Naive thymus-derived CD4-positive, alpha-beta T cell (primary cell): ENCODE measurements at regions of chr4 and their contacts with region 1.

Region 1: GRCh38 chr4:108834835-108835384 is 72.1 kb upstream of the ETNPPL start:
- DNase-seq: peak in 4 of 9 donors; percentile 14 to 33 (median 18)
- ATAC-seq: no peak
- H3K4me3 ChIP-seq: no peak overlapping the region
- H3K4me3 Mint-ChIP-seq: no peak overlapping the region
- H3K27ac ChIP-seq: no peak overlapping the region
- H3K27ac Mint-ChIP-seq: no peak overlapping the region
- H3K4me1 ChIP-seq: no peaks in the 10 kb centered on the region
- H3K4me1 Mint-ChIP-seq: peaks cover 0 to 8% (median 0%) of the 10 kb centered on the region in 7 donors
- H3K27me3 ChIP-seq: no peaks in the 10 kb centered on the region
- H3K27me3 Mint-ChIP-seq: peaks cover 0 to 17% (median 12%) of the 10 kb centered on the region in 5 donors

Region 2: GRCh38 chr4:108345862-108346817 is 488.8 kb before region 1 on chr4:
- CTCF ChIA-PET with region 1: no interaction called
- POLR2A ChIA-PET with region 1: no interaction called
- intact Hi-C with region 1: no loop called
- DNase-seq: no peak
- ATAC-seq: no peak
- H3K4me3 ChIP-seq: no peak overlapping the region
- H3K4me3 Mint-ChIP-seq: peak overlapping the region in 2 of 10 donors; percentile 41 to 46
- H3K27ac ChIP-seq: no peak overlapping the region
- H3K27ac Mint-ChIP-seq: peak overlapping the region in 5 of 9 donors; percentile 7 to 94 (median 39)
- H3K4me1 ChIP-seq: peaks cover 12 to 37% of the 10 kb centered on the region in 2 donors
- H3K4me1 Mint-ChIP-seq: peaks cover 31 to 76% (median 51%) of the 10 kb centered on the region in 7 donors
- H3K27me3 ChIP-seq: no peaks in the 10 kb centered on the region
- H3K27me3 Mint-ChIP-seq: peaks cover 0 to 5% (median 0%) of the 10 kb centered on the region in 5 donors

Region 3: DNA sequence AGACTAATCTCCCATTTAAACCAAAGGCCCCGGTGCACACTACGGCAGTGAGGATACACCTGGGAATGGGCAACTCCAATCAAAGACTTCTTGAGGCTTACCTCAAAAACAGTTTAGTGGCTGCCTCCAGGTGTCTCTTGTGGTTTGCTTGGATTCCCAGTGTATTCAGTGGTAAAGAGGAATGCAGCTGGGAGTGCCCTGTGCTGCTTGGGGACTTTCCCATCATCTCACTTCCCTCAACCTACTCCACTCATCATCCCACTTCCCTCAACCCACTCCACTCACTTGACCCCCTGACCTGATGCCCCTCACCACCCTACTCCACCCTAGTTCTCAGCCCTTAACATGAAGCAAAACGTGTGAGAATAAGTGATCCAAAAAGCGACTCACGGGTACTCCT is 105.2 kb after region 1 on chr4:
- CTCF ChIA-PET with region 1: no interaction called
- POLR2A ChIA-PET with region 1: no interaction called
- intact Hi-C with region 1: no loop called
- DNase-seq: no peak
- ATAC-seq: no peak
- H3K4me3 ChIP-seq: no peak overlapping the region
- H3K4me3 Mint-ChIP-seq: no peak overlapping the region
- H3K27ac ChIP-seq: no peak overlapping the region
- H3K27ac Mint-ChIP-seq: no peak overlapping the region
- H3K4me1 ChIP-seq: no peaks in the 10 kb centered on the region
- H3K4me1 Mint-ChIP-seq: peaks cover 0 to 6% (median 0%) of the 10 kb centered on the region in 7 donors
- H3K27me3 ChIP-seq: no peaks in the 10 kb centered on the region
- H3K27me3 Mint-ChIP-seq: peaks cover 0 to 16% (median 0%) of the 10 kb centered on the region in 5 donors

Region 4: GRCh38 chr4:109046471-109047201 is 211.7 kb after region 1 on chr4:
- CTCF ChIA-PET with region 1: no interaction called
- POLR2A ChIA-PET with region 1: no interaction called
- intact Hi-C with region 1: loop called in 1 of 2 experiments (anchors 5 kb)
- DNase-seq: no peak
- ATAC-seq: peak; percentile 27
- H3K4me3 ChIP-seq: no peak overlapping the region
- H3K4me3 Mint-ChIP-seq: peak overlapping the region in 3 of 10 donors; percentile 32 to 72 (median 49)
- H3K27ac ChIP-seq: no peak overlapping the region
- H3K27ac Mint-ChIP-seq: peak overlapping the region in 2 of 9 donors; percentile 25 to 35
- H3K4me1 ChIP-seq: no peaks in the 10 kb centered on the region
- H3K4me1 Mint-ChIP-seq: peaks cover 0 to 13% (median 6%) of the 10 kb centered on the region in 7 donors
- H3K27me3 ChIP-seq: no peaks in the 10 kb centered on the region
- H3K27me3 Mint-ChIP-seq: peaks cover 0 to 4% (median 0%) of the 10 kb centered on the region in 5 donors

Region 5: GRCh38 chr4:109078724-109079123 is 243.8 kb after region 1 on chr4:
- CTCF ChIA-PET with region 1: no interaction called
- POLR2A ChIA-PET with region 1: no interaction called
- intact Hi-C with region 1: no loop called
- DNase-seq: no peak
- ATAC-seq: no peak
- H3K4me3 ChIP-seq: no peak overlapping the region
- H3K4me3 Mint-ChIP-seq: no peak overlapping the region
- H3K27ac ChIP-seq: no peak overlapping the region
- H3K27ac Mint-ChIP-seq: no peak overlapping the region
- H3K4me1 ChIP-seq: no peaks in the 10 kb centered on the region
- H3K4me1 Mint-ChIP-seq: no peaks in the 10 kb centered on the region
- H3K27me3 ChIP-seq: peaks cover 0 to 5% of the 10 kb centered on the region in 2 donors
- H3K27me3 Mint-ChIP-seq: peaks cover 0 to 15% (median 0%) of the 10 kb centered on the region in 5 donors

Region 6: GRCh38 chr4:109294006-109294405 is 459.1 kb after region 1 on chr4:
- CTCF ChIA-PET with region 1: interaction called, 3 read pairs
- POLR2A ChIA-PET with region 1: no interaction called
- intact Hi-C with region 1: loop called in 1 of 2 experiments (anchors 2 kb)
- DNase-seq: peak in 2 of 9 donors; percentile 11 to 13
- ATAC-seq: peak; percentile 70
- H3K4me3 ChIP-seq: no peak overlapping the region
- H3K4me3 Mint-ChIP-seq: no peak overlapping the region
- H3K27ac ChIP-seq: no peak overlapping the region
- H3K27ac Mint-ChIP-seq: no peak overlapping the region
- H3K4me1 ChIP-seq: no peaks in the 10 kb centered on the region
- H3K4me1 Mint-ChIP-seq: no peaks in the 10 kb centered on the region
- H3K27me3 ChIP-seq: no peaks in the 10 kb centered on the region
- H3K27me3 Mint-ChIP-seq: peaks cover 34 to 41% (median 37%) of the 10 kb centered on the region in 5 donors

Region 7: DNA sequence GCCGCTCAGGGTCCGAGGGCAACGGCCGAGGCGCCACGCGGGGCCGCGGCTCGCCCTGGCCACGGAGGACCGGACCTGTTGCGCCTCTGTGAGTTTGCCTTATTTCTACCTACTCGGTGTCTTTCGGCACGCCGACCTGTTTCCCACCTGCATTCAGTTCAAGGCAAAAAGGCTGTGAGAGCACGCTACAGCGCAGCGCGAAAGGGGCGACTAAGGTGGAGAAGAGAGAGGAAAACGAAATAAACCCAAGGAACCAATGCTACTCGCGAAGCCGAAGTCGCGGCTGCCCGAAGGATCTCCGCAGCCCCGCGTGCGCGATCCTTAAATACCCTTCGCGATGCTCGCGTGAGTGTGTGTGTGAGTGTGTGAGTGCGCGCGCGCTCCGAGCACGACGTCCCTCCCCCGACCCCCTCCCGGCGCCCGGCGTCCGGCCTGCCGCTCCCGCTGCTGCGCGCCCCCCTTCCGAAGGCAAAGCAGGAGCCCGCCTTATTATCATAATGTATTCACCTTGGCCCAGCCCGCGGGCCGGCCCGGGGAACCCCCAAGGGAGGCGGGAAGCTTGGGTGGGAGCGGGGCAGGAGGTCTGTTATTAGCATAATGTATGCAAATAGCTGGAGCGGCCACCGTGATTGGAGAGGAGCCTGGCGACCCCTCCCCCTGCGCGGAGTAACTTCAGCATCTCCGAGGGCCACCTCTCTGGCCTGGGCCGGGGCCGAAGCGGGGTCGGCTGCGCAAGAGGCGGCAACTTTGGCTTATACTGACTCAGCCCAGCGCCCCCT is 467.6 kb after region 1 on chr4 and contains the start of gene COL25A1:
- CTCF ChIA-PET with region 1: interaction called, 3 read pairs
- POLR2A ChIA-PET with region 1: no interaction called
- intact Hi-C with region 1: loop called in 1 of 2 experiments (anchors 10 kb)
- DNase-seq: peak; percentile 7 to 60 (median 41)
- ATAC-seq: peak; percentile 77
- H3K4me3 ChIP-seq: peak within 1 kb of the TSS; percentile 73
- H3K4me3 Mint-ChIP-seq: peak within 1 kb of the TSS; percentile 76 to 92 (median 84)
- H3K27ac ChIP-seq: no peak within 1 kb of the TSS
- H3K27ac Mint-ChIP-seq: peak within 1 kb of the TSS in 5 of 9 donors; percentile 21 to 65 (median 36)
- H3K4me1 ChIP-seq: peaks cover 8 to 9% of the 10 kb centered on the region in 2 donors
- H3K4me1 Mint-ChIP-seq: peaks cover 11 to 25% (median 19%) of the 10 kb centered on the region in 7 donors
- H3K27me3 ChIP-seq: peaks cover 10 to 16% of the 10 kb centered on the region in 2 donors
- H3K27me3 Mint-ChIP-seq: peaks cover 47 to 80% (median 64%) of the 10 kb centered on the region in 5 donors
- total RNA-seq, gene COL25A1: 0.22 to 0.59 (median 0.49) TPM in 4 of 5 experiments, not detected in the other

Region 8: DNA sequence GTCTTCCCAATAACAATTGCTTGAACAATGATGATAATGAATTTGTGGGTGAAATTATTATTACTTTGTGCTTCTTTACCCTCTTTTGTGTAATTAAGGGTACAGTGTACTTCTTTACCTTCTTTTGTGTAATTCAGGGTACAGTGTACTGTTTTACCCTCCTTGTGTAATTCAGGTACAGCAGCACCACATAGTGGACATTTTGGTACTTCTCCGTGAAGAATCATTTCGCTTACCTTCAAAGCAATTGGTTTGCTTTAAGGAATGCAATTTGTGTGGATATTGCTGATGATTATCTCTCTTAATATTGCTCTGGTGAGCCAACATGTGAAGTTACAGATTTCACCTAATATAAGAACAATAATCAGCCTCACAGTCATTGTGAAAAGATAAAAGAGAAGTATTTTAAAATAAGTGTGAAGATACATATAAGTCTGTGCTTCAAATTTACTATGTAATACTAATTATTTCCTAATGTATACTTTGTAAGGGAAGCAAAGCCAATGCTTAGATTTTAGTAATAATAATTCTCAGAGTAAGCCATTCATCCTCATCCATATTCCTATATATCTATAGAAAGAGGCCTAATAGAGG is 571.5 kb after region 1 on chr4:
- CTCF ChIA-PET with region 1: interaction called, 3 read pairs
- POLR2A ChIA-PET with region 1: no interaction called
- intact Hi-C with region 1: loop called (anchors 1 kb)
- DNase-seq: peak in 7 of 9 donors; percentile 21 to 63 (median 42)
- ATAC-seq: peak; percentile 79
- H3K4me3 ChIP-seq: no peak overlapping the region
- H3K4me3 Mint-ChIP-seq: no peak overlapping the region
- H3K27ac ChIP-seq: no peak overlapping the region
- H3K27ac Mint-ChIP-seq: no peak overlapping the region
- H3K4me1 ChIP-seq: no peaks in the 10 kb centered on the region
- H3K4me1 Mint-ChIP-seq: no peaks in the 10 kb centered on the region
- H3K27me3 ChIP-seq: no peaks in the 10 kb centered on the region
- H3K27me3 Mint-ChIP-seq: peaks cover 0 to 27% (median 0%) of the 10 kb centered on the region in 5 donors

Region 9: DNA sequence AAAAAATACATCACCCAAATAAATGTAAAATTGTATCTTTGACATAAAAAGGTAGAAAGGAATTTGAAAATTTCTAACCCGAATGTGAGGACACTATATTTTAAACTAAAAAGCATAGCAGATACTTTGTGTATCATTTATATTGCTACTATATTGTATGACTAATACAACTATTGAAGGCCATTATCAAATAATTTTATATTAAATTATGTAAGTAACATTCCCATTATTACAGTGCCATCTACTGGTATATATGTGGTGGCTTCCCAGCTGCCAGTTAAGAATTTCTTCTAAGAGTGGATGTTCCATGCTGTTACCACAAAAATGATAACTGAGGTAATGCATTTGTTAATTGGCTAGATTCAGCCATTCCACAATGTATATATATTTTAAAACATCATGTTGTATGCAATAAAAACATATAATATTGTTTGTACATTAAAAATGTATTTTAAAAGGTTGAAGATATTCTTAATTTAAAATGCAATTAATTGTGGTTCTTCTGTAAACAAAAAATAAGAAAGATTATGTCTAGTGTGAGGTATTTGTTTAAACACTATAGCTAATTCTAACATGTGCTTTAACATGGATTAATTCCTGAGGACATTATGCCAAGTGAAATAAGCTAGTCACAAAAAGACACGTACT is 1143.1 kb after region 1 on chr4:
- CTCF ChIA-PET with region 1: no interaction called
- POLR2A ChIA-PET with region 1: no interaction called
- intact Hi-C with region 1: loop called in 1 of 2 experiments (anchors 2 kb)
- DNase-seq: peak in 5 of 9 donors; percentile 5 to 34 (median 10)
- ATAC-seq: peak; percentile 45
- H3K4me3 ChIP-seq: no peak overlapping the region
- H3K4me3 Mint-ChIP-seq: no peak overlapping the region
- H3K27ac ChIP-seq: no peak overlapping the region
- H3K27ac Mint-ChIP-seq: no peak overlapping the region
- H3K4me1 ChIP-seq: no peaks in the 10 kb centered on the region
- H3K4me1 Mint-ChIP-seq: peaks cover 0 to 5% (median 0%) of the 10 kb centered on the region in 7 donors
- H3K27me3 ChIP-seq: no peaks in the 10 kb centered on the region
- H3K27me3 Mint-ChIP-seq: peaks cover 9 to 57% (median 28%) of the 10 kb centered on the region in 5 donors